WTC11 (cell line): ENCODE measurements at regions of chr15 and their contacts with region 1.

Region 1: DNA sequence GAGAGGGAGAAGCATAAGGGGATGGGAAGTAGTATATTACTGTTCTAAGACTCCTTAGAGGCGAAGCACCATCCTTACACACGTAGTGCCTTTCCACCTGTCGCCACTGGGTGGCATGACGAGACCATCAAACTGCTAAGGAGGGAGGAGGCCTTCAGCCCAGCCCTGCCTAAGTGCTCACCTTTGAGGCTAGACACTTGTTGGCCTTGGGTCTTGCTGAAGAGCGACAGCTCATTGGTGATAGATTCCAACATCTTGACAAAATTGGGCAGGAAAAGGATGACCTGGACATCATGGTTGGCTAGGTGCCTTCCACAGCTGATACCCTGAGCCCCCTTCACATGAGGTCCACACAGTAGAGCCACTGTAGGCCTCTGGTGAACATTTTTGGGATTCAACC is 19.6 kb downstream of the CLK3 start:
- DNase-seq: peak; percentile 80
- ATAC-seq: peak; percentile 83
- H3K4me3 Mint-ChIP-seq: no peak overlapping the region
- H3K27ac Mint-ChIP-seq: no peak overlapping the region
- H3K4me1 Mint-ChIP-seq: no peaks in the 10 kb centered on the region
- H3K27me3 Mint-ChIP-seq: no peaks in the 10 kb centered on the region
- CTCF ChIP-seq: peak; percentile 84

Region 2: DNA sequence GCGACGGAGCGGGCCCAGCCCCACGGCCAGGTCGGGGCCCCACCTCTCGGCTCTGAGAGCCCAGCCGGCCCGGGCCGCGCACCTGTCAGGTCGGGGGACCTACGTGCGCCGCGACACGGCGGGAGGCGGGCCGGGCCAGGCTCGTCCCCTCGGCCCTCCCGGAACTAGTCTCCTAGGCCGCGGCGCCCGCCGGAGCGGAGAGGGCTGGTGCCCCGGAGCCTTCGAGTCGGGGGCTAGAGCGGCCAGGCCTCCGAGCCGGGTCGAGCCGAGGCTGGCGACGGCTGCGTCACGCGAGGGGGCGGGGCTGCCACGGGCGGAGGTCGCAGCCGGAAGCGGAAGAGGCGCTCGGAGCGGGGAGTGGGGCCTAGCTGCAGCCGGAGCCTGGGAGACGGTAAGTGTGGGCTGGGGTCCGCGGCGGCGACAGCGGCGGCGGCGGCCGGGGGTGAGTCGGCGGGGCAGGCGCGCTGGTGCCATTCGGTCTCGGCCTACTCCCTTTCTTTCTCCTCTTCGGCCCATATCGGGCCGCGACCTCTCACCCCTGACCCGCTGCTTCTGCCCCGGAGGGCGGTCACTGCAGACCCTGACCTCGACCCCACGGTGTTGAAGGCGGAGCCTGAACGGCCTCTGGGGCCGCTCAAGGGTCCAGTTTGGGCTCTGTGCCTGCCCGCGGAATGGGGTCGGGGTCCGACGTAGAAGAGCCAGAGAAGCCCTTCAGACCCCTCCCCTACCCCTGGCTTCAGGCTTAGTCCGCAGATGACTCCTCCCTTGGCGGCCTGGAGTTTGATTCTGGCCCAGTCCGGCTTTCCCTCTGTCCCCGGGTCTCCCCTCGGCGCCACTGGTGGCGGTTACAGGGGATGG is 19.5 kb before region 1 on chr15 and contains the start of gene CLK3:
- CTCF ChIA-PET with region 1: interaction called, 87 read pairs
- POLR2A ChIA-PET with region 1: no interaction called
- DNase-seq: peak; percentile 99
- ATAC-seq: peak; percentile 92
- H3K4me3 Mint-ChIP-seq: peak within 1 kb of the TSS; percentile 86
- H3K27ac Mint-ChIP-seq: peak within 1 kb of the TSS; percentile 95
- H3K4me1 Mint-ChIP-seq: peaks cover 17% of the 10 kb centered on the region
- H3K27me3 Mint-ChIP-seq: peaks cover 22% of the 10 kb centered on the region
- CTCF ChIP-seq: no peak
- total RNA-seq, gene CLK3: 45.2 to 48.1 TPM (median 46.3 TPM) in 3 replicates

Region 3: GRCh38 chr15:74723754-74724334 is 88.6 kb after region 1 on chr15:
- CTCF ChIA-PET with region 1: interaction called, 17 read pairs
- POLR2A ChIA-PET with region 1: no interaction called
- DNase-seq: no peak
- ATAC-seq: peak; percentile 69
- H3K4me3 Mint-ChIP-seq: no peak overlapping the region
- H3K27ac Mint-ChIP-seq: no peak overlapping the region
- H3K4me1 Mint-ChIP-seq: peaks cover 15% of the 10 kb centered on the region
- H3K27me3 Mint-ChIP-seq: peaks cover 65% of the 10 kb centered on the region
- CTCF ChIP-seq: no peak

Region 4: DNA sequence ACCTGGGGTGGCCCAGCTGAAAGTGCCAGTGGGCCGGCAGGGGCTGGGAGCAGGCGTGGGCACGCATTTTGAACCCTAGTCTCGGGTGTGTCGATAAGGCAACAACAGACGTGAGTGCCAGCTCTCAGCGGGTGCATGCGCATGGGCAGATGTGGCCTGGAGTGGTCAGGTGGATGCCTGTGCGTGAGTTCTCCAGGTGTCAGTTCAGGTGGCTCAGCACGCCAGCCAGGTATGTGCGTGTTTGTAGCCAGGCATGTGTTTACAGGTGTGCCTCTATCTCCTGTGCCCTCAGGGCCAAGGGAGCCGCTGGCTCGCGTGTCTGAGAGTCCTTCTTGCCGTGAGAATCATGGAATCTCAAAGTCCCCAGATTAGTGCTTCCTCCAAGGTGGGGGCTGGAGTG is 128.2 kb after region 1 on chr15:
- CTCF ChIA-PET with region 1: interaction called, 409 read pairs
- POLR2A ChIA-PET with region 1: interaction called, 8 read pairs
- DNase-seq: no peak
- ATAC-seq: no peak
- H3K4me3 Mint-ChIP-seq: no peak overlapping the region
- H3K27ac Mint-ChIP-seq: no peak overlapping the region
- H3K4me1 Mint-ChIP-seq: peaks cover 20% of the 10 kb centered on the region
- H3K27me3 Mint-ChIP-seq: peaks cover 3% of the 10 kb centered on the region; the same call in 1 of the 2 replicates
- CTCF ChIP-seq: no peak

Region 5: GRCh38 chr15:74787251-74788041 is 152.2 kb after region 1 on chr15:
- CTCF ChIA-PET with region 1: interaction called, 18 read pairs
- POLR2A ChIA-PET with region 1: no interaction called
- DNase-seq: peak; percentile 80
- ATAC-seq: peak; percentile 82
- H3K4me3 Mint-ChIP-seq: no peak overlapping the region
- H3K27ac Mint-ChIP-seq: no peak overlapping the region
- H3K4me1 Mint-ChIP-seq: peaks cover 49% of the 10 kb centered on the region
- H3K27me3 Mint-ChIP-seq: no peaks in the 10 kb centered on the region; the same call in 1 of the 2 replicates
- CTCF ChIP-seq: peak; percentile 35

Region 6: DNA sequence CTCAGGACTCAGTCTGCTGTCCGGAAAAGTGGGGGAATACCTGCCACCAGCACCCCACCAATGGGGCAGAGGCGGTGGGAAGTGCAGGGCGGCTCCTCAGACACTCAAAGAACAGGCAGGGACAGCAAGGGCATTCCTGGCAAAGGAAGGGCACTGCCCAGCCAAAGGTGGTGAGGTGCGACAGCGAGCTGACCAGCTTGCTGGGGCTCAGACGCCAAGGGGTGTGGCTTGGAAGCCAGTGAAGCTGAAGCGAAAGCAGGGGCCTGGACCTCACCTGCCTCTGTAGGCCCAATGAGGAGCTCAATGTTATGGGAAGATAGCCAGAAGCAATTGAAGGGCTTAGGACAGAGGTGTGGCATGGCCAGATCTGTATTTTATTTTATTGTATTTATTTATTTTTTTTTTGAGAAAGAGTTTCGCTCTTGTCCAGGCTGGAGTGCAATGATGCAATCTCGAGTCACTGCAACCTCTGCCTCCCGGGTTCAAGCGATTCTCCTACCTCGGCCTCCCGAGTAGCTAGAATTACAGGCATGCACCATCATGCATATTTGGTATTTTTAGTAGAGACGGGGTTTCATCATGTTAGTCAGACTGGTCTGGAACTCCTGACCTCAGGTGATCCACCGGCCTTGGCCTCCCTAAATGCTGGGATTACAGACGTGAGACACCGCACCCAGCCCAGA is 173.0 kb after region 1 on chr15:
- CTCF ChIA-PET with region 1: interaction called, 10 read pairs
- POLR2A ChIA-PET with region 1: no interaction called
- DNase-seq: no peak
- ATAC-seq: no peak
- H3K4me3 Mint-ChIP-seq: no peak overlapping the region
- H3K27ac Mint-ChIP-seq: no peak overlapping the region
- H3K4me1 Mint-ChIP-seq: peaks cover 6% of the 10 kb centered on the region
- H3K27me3 Mint-ChIP-seq: no peaks in the 10 kb centered on the region
- CTCF ChIP-seq: no peak

Region 7: GRCh38 chr15:75061272-75061671 is 426.0 kb after region 1 on chr15:
- CTCF ChIA-PET with region 1: no interaction called
- POLR2A ChIA-PET with region 1: no interaction called
- DNase-seq: no peak
- ATAC-seq: no peak
- H3K4me3 Mint-ChIP-seq: no peak overlapping the region
- H3K27ac Mint-ChIP-seq: no peak overlapping the region
- H3K4me1 Mint-ChIP-seq: peaks cover 19% of the 10 kb centered on the region
- H3K27me3 Mint-ChIP-seq: peaks cover under 1% of the 10 kb centered on the region; the same call in 1 of the 2 replicates
- CTCF ChIP-seq: no peak